Posterior cingulate gyrus (tissue), 11 donors: ENCODE measurements at regions of chr5 and their contacts with region 1.

Region 1: GRCh38 chr5:73454351-73455036 is 5.9 kb upstream of the FOXD1 start:
- DNase-seq: peak in 1 of 10 donors; percentile 22

Region 2: GRCh38 chr5:72752909-72753308 is 701.6 kb before region 1 on chr5:
- intact Hi-C with region 1: no loop called
- DNase-seq: no peak

Region 3: DNA sequence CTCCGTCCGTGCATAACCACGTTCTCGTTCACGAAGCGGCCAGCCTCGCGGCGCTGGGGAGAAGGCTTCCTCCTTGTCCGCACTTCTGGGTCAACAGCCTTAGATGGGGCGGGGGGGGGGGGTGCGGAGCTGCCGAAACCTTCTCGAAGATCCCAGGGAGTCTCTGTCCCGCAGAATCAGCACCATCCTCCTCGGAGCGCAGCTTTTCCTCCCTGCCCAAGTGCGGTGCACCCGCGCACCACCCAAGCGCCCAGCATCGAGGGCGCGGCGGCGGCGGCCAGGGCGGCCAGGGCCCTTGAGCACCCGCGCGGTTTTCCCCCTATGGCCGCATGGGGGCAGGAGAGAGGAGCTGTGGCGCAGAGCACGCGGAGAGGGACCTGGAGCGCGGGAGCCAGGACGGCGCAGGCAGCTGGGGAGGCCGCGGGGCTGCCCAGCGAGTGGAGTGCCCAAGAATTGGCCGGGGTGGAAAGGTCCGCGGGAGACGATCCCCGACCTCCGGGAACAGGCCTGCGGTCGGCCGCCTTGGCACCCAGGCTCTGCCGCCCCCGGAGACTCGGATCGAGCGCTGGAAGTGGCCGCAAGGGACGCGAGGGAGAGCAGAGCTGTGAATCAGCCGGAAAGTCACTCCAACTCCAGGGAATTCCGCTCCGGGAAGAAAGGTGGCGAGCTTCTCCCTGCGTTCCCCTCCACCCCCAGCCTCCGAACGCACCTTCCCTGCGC is 238.4 kb before region 1 on chr5:
- intact Hi-C with region 1: loop called (anchors 5 kb)
- DNase-seq: peak in 9 of 10 donors; percentile 39 to 94 (median 72)